B cell (primary cell): ENCODE measurements at regions of chr19 and their contacts with region 1.

Region 1: DNA sequence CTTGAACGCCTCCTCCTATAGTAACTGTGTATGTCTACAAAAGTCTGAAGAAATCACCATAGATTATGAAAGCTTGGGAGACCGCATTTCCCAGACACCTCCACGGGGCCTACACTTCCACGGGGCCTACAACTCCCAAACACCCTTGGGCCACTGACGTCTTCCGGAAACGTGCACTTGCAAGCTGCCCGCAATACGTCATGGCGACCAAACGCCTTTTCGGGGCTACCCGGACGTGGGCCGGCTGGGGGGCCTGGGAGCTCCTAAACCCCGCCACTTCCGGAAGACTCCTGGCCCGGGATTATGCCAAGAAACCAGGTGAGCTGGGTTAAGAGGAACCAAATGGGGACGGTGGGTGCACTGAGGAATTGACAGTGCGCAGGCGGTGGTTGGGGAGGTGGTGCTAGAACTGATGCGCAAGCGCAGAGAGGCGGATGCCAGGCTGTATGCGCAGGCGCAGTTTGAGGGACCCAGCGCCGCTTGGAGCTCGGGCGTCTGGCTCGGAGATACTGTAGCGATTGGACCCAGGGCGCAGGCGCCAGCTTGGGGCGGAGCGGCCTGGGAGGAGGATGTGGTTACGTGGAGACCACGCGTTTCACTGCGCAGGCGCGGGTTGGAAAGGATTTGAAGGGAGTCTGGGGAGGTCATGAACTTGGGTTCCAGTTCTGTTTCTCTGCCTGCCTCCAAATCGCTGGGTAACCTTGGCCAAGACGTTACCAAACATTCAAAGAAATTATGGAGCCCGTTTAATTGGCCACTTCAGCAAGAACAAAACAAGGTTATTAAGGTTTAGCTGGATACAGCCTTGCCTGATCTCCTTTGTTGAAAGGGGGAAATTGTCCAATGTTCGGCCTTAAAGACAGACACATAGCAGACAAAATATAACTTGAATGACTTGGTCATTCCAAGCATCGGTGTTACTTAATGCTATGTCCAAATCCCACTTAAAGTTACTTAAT is at the start of gene MRPL54:
- DNase-seq: peak; percentile 100
- ATAC-seq: peak; percentile 78
- H3K4me3 ChIP-seq: peak within 1 kb of the TSS; percentile 49 to 99 (median 97)
- H3K4me3 Mint-ChIP-seq: peak within 1 kb of the TSS; percentile 99
- H3K27ac ChIP-seq: peak within 1 kb of the TSS; percentile 100
- H3K27ac Mint-ChIP-seq: peak within 1 kb of the TSS; percentile 100
- H3K4me1 ChIP-seq: peaks cover 25 to 35% of the 10 kb centered on the region in 2 donors
- H3K4me1 Mint-ChIP-seq: peaks cover 37% of the 10 kb centered on the region
- H3K27me3 ChIP-seq: no peaks in the 10 kb centered on the region
- H3K27me3 Mint-ChIP-seq: no peaks in the 10 kb centered on the region
- CTCF ChIP-seq: no peak
- total RNA-seq, gene MRPL54: 48.6 and 54.3 TPM in 2 replicates

Region 2: DNA sequence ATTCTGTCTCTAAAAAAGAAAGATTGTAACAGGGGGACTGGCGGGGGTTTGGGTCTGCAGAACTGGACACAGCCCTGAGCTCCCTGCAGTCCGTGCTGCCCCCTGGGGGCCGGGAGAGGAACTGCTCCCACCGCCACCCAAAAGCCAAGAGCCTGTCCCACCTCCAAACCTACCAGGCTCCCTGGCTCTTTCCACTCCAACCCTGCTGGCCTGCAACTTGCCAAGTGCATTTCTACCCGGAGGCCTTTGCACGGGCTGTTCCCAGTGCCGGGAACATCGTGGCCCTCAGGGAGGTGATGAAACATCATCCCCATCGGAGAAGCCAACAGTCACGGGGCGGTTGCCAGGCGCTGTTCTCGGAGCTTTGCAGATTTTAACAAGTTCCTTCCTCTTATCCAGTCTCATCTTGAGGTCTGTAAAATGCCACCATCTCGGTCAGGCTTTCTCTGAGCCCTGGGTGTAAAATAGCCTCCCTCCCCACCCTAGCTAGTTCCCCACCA is 333.1 kb before region 1 on chr19:
- CTCF ChIA-PET with region 1: no interaction called
- POLR2A ChIA-PET with region 1: no interaction called
- intact Hi-C with region 1: no loop called
- DNase-seq: peak; percentile 82
- ATAC-seq: peak; percentile 82
- H3K4me3 ChIP-seq: no peak overlapping the region
- H3K4me3 Mint-ChIP-seq: no peak overlapping the region
- H3K27ac ChIP-seq: no peak overlapping the region
- H3K27ac Mint-ChIP-seq: no peak overlapping the region
- H3K4me1 ChIP-seq: peaks cover 11 to 22% of the 10 kb centered on the region in 2 donors
- H3K4me1 Mint-ChIP-seq: peaks cover 13% of the 10 kb centered on the region
- H3K27me3 ChIP-seq: no peaks in the 10 kb centered on the region
- H3K27me3 Mint-ChIP-seq: no peaks in the 10 kb centered on the region
- CTCF ChIP-seq: peak; percentile 97

Region 3: GRCh38 chr19:3505598-3506383 is 257.0 kb before region 1 on chr19 and contains the start of gene FZR1:
- CTCF ChIA-PET with region 1: no interaction called
- POLR2A ChIA-PET with region 1: interaction called, 4 read pairs
- intact Hi-C with region 1: loop called (anchors 5 kb)
- DNase-seq: peak; percentile 100
- ATAC-seq: peak; percentile 91
- H3K4me3 ChIP-seq: peak within 1 kb of the TSS; percentile 74 to 95 (median 77)
- H3K4me3 Mint-ChIP-seq: peak within 1 kb of the TSS; percentile 92
- H3K27ac ChIP-seq: peak within 1 kb of the TSS; percentile 92 to 94
- H3K27ac Mint-ChIP-seq: peak within 1 kb of the TSS; percentile 99
- H3K4me1 ChIP-seq: peaks cover 12 to 21% of the 10 kb centered on the region in 2 donors
- H3K4me1 Mint-ChIP-seq: peaks cover 49% of the 10 kb centered on the region
- H3K27me3 ChIP-seq: no peaks in the 10 kb centered on the region
- H3K27me3 Mint-ChIP-seq: no peaks in the 10 kb centered on the region
- CTCF ChIP-seq: no peak
- total RNA-seq, gene FZR1: 96.1 and 105 TPM in 2 replicates

Region 4: GRCh38 chr19:3572132-3572854 is 190.5 kb before region 1 on chr19:
- CTCF ChIA-PET with region 1: no interaction called
- POLR2A ChIA-PET with region 1: no interaction called
- intact Hi-C with region 1: loop called (anchors 5 kb)
- DNase-seq: peak; percentile 99
- ATAC-seq: peak; percentile 94
- H3K4me3 ChIP-seq: peak overlapping the region; percentile 11 to 74 (median 54)
- H3K4me3 Mint-ChIP-seq: peak overlapping the region; percentile 86
- H3K27ac ChIP-seq: peak overlapping the region; percentile 24 to 65
- H3K27ac Mint-ChIP-seq: peak overlapping the region; percentile 83
- H3K4me1 ChIP-seq: peaks cover 12 to 18% of the 10 kb centered on the region in 2 donors
- H3K4me1 Mint-ChIP-seq: peaks cover 16% of the 10 kb centered on the region
- H3K27me3 ChIP-seq: no peaks in the 10 kb centered on the region
- H3K27me3 Mint-ChIP-seq: no peaks in the 10 kb centered on the region
- CTCF ChIP-seq: no peak

Region 5: DNA sequence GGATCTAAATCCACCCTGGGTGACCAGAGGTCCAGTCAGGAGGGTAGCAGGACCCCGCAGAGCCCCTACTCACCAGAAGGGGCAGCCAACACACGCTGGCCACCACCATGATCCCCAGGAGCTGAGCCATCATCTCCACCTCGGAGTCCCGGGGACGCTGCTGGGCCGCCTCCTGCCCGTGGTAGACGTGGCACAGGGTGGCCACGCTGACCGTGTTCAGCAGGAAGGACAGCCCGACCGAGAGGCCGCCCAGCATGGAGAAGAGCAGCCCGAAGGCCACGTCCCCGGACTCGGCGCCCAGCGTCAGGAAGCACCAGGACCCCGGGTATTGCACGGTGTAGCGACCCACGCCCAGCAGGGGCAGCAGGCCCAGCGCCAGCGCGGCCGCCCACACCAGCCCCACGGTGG is 163.0 kb before region 1 on chr19:
- CTCF ChIA-PET with region 1: no interaction called
- POLR2A ChIA-PET with region 1: no interaction called
- intact Hi-C with region 1: no loop called
- DNase-seq: no peak
- ATAC-seq: no peak
- H3K4me3 ChIP-seq: no peak overlapping the region
- H3K4me3 Mint-ChIP-seq: no peak overlapping the region
- H3K27ac ChIP-seq: no peak overlapping the region
- H3K27ac Mint-ChIP-seq: no peak overlapping the region
- H3K4me1 ChIP-seq: peaks cover 5 to 8% of the 10 kb centered on the region in 2 donors
- H3K4me1 Mint-ChIP-seq: no peaks in the 10 kb centered on the region
- H3K27me3 ChIP-seq: no peaks in the 10 kb centered on the region
- H3K27me3 Mint-ChIP-seq: no peaks in the 10 kb centered on the region
- CTCF ChIP-seq: no peak

Region 6: DNA sequence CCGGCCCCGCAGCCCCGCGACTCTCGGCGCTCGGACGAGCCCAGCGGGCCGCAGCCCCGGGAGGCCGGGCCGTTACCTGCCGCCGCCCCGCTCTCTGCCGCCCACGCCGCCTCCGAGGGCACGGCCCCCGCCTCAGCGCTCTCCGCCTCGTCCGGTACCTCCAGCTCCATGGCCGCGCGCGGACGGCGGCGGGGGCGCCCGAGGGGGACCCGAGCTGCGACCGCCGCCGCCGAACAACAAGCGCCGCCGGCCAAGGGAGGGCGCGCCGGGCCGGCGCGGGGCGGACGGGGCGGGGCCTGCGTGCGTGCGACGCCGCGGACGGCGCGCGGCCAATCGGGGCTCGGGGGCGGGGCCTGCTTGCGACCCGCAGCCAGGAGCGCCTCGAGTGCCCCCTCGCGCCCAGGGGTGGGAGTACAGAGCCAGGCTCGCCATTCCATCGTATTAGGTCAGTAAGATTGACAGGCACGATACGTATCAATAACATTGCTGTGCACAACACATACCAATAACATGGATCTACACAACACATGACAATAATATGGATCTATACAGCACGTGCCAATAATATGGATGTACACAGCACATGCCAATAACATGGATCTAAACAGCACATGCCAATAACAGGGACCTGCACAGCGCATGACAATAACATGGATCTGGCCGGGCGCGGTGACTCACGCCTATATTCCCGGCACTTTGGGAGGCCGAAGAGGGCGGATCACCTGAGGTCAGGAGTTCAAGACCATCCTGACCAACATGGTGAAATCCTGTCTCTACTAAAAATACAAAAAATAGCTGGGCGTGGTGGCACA is 62.4 kb before region 1 on chr19 and contains the start of gene PIP5K1C:
- CTCF ChIA-PET with region 1: interaction called, 10 read pairs
- POLR2A ChIA-PET with region 1: no interaction called
- intact Hi-C with region 1: no loop called
- DNase-seq: peak; percentile 95
- ATAC-seq: peak; percentile 99
- H3K4me3 ChIP-seq: peak within 1 kb of the TSS; percentile 41 to 72 (median 70)
- H3K4me3 Mint-ChIP-seq: peak within 1 kb of the TSS; percentile 91
- H3K27ac ChIP-seq: peak within 1 kb of the TSS in 1 of 2 donors; percentile 42
- H3K27ac Mint-ChIP-seq: peak within 1 kb of the TSS; percentile 80
- H3K4me1 ChIP-seq: peaks cover 16 to 23% of the 10 kb centered on the region in 2 donors
- H3K4me1 Mint-ChIP-seq: peaks cover 28% of the 10 kb centered on the region
- H3K27me3 ChIP-seq: no peaks in the 10 kb centered on the region
- H3K27me3 Mint-ChIP-seq: peaks cover 2% of the 10 kb centered on the region
- CTCF ChIP-seq: peak; percentile 74
- total RNA-seq, gene PIP5K1C: 42.3 and 46.7 TPM in 2 replicates

Region 7: GRCh38 chr19:3809881-3810707 is 47.3 kb after region 1 on chr19:
- CTCF ChIA-PET with region 1: interaction called, 7 read pairs
- POLR2A ChIA-PET with region 1: interaction called, 14 read pairs
- intact Hi-C with region 1: loop called (anchors 2 kb)
- DNase-seq: peak; percentile 83
- ATAC-seq: peak; percentile 67
- H3K4me3 ChIP-seq: peak overlapping the region in 4 of 5 experiments; percentile 0 to 44 (median 14)
- H3K4me3 Mint-ChIP-seq: peak overlapping the region; percentile 63
- H3K27ac ChIP-seq: peak overlapping the region; percentile 71 to 85
- H3K27ac Mint-ChIP-seq: peak overlapping the region; percentile 76
- H3K4me1 ChIP-seq: peaks cover 44 to 66% of the 10 kb centered on the region in 2 donors
- H3K4me1 Mint-ChIP-seq: peaks cover 63% of the 10 kb centered on the region
- H3K27me3 ChIP-seq: no peaks in the 10 kb centered on the region
- H3K27me3 Mint-ChIP-seq: no peaks in the 10 kb centered on the region
- CTCF ChIP-seq: no peak

Region 8: DNA sequence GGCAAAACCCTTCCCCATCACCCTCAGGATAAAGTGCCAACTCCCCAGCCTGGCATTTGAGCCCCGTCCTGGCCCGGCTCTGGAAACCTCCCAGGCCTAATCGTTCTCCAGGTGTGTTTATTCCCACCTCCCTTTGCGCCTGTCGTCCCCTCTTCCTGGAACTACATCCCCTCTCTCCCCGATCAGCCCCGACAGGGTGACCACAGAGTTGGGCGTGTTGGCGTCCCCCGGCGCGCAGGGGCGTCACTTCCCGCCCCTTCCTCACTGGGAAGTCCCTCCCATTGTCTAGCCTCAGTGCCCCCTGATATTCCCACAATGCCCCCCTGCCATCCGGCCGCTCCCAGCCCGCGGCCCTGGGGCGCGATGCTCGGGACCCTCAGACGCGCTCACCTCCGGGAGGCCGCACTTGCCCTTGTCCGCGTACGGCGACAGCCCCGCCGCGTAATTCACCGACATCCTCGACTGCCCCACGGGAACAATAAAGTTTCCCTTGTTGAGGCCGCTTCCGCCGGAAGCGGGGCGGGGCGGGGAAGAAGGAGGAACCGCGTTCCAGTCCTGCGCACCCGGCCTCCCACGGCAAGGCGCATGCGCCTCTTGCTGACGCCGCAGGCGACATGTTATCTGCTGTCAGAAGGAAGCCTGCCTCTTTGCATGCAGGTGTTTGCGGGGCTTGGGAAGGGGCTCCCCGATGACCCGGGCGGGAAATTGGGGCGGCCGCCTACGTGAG is 419.5 kb after region 1 on chr19 and contains the starts of genes ANKRD24 and SIRT6:
- CTCF ChIA-PET with region 1: no interaction called
- POLR2A ChIA-PET with region 1: no interaction called
- intact Hi-C with region 1: loop called (anchors 1 kb)
- DNase-seq: peak; percentile 97
- ATAC-seq: peak; percentile 83
- H3K4me3 ChIP-seq: peak within 1 kb of the TSS; percentile 65 to 91 (median 85)
- H3K4me3 Mint-ChIP-seq: peak within 1 kb of the TSS; percentile 99
- H3K27ac ChIP-seq: peak within 1 kb of the TSS; percentile 72 to 95
- H3K27ac Mint-ChIP-seq: peak within 1 kb of the TSS; percentile 98
- H3K4me1 ChIP-seq: peaks cover 20 to 32% of the 10 kb centered on the region in 2 donors
- H3K4me1 Mint-ChIP-seq: peaks cover 37% of the 10 kb centered on the region
- H3K27me3 ChIP-seq: no peaks in the 10 kb centered on the region
- H3K27me3 Mint-ChIP-seq: peaks cover 6% of the 10 kb centered on the region
- CTCF ChIP-seq: no peak
- total RNA-seq, gene ANKRD24: 0.37 and 1.4 TPM in 2 replicates
- total RNA-seq, gene SIRT6: 27.8 and 30.4 TPM in 2 replicates

Region 9: DNA sequence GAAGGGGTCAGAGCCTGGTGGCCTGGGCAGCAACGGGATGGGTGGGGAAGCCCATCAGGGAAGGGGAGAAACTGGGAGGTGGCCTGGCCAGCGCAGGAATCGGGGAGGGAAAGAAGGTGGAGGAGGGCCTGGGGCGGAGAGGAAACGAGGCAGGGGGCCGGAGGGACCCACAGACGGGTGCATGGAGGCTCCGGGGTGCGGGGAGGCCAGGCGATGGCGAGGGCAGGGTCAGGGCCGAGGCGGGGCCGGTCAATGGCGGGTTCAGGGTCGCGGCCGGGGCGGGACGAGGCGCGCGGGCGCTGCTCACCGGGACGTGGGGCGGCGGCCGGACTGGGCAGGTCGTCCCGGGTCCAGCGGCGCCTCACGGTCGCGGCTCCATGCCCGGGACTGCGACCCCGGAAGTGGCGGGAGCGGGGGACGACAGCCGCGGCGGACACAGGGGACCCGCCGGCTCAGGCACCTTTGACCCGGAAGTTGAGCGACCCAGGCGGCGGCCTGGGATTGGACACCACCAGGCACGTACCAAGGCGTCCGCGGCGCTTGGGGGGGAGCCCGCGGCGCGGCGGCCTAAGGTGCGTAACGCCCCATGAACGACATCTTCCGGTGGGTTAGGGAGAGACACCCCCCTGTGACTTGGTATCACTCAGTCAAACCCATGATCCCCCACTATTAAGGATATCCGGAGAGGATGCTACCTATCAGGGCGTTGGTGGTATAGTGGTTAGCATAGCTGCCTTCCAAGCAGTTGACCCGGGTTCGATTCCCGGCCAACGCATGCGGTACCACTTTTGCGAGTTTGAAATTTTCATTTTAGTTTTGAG is 960.8 kb after region 1 on chr19 and contains the start of gene DPP9:
- CTCF ChIA-PET with region 1: interaction called, 3 read pairs
- POLR2A ChIA-PET with region 1: no interaction called
- intact Hi-C with region 1: loop called (anchors 5 kb)
- DNase-seq: peak; percentile 100
- ATAC-seq: peak; percentile 94
- H3K4me3 ChIP-seq: peak within 1 kb of the TSS; percentile 71 to 97 (median 91)
- H3K4me3 Mint-ChIP-seq: peak within 1 kb of the TSS; percentile 97
- H3K27ac ChIP-seq: peak within 1 kb of the TSS; percentile 63 to 89
- H3K27ac Mint-ChIP-seq: peak within 1 kb of the TSS; percentile 98
- H3K4me1 ChIP-seq: peaks cover 20 to 26% of the 10 kb centered on the region in 2 donors
- H3K4me1 Mint-ChIP-seq: peaks cover 45% of the 10 kb centered on the region
- H3K27me3 ChIP-seq: no peaks in the 10 kb centered on the region
- H3K27me3 Mint-ChIP-seq: peaks cover 3% of the 10 kb centered on the region
- CTCF ChIP-seq: no peak
- total RNA-seq, gene DPP9: 109 and 115 TPM in 2 replicates